Pancreas (tissue), 10 donors: ENCODE measurements at regions of chr1 and their contacts with region 1.

Region 1: GRCh38 chr1:78114034-78114956 is 68.5 kb downstream of the GIPC2 start:
- DNase-seq: peak in 3 of 6 donors; percentile 48 to 75 (median 50)
- ATAC-seq: peak; percentile 87 to 98 (median 96)
- H3K4me3 ChIP-seq: no peak overlapping the region
- H3K27ac ChIP-seq: peak overlapping the region in 1 of 4 donors; percentile 9
- H3K4me1 ChIP-seq: no peaks in the 10 kb centered on the region
- H3K27me3 ChIP-seq: no peaks in the 10 kb centered on the region
- CTCF ChIP-seq: peak in 3 of 4 donors; percentile 57 to 73 (median 59)

Region 2: GRCh38 chr1:77825131-77825709 is 289.1 kb before region 1 on chr1:
- intact Hi-C with region 1: loop called in 1 of 3 experiments (anchors 10 kb)
- DNase-seq: peak in 4 of 6 donors; percentile 25 to 61 (median 58)
- ATAC-seq: peak; percentile 95 to 99 (median 97)
- H3K4me3 ChIP-seq: no peak overlapping the region
- H3K27ac ChIP-seq: no peak overlapping the region
- H3K4me1 ChIP-seq: peaks cover 0 to 12% (median 0%) of the 10 kb centered on the region in 3 donors
- H3K27me3 ChIP-seq: no peaks in the 10 kb centered on the region
- CTCF ChIP-seq: peak in 1 of 4 donors; percentile 10

Region 3: GRCh38 chr1:77888081-77888780 is 226.1 kb before region 1 on chr1 and contains the start of gene NEXN:
- intact Hi-C with region 1: no loop called
- DNase-seq: peak; percentile 76 to 89 (median 81)
- ATAC-seq: peak; percentile 83 to 88 (median 86)
- H3K4me3 ChIP-seq: peak within 1 kb of the TSS; percentile 70 to 76 (median 72)
- H3K27ac ChIP-seq: peak within 1 kb of the TSS; percentile 73 to 93 (median 88)
- H3K4me1 ChIP-seq: peaks cover 0 to 7% (median 0%) of the 10 kb centered on the region in 3 donors
- H3K27me3 ChIP-seq: no peaks in the 10 kb centered on the region
- CTCF ChIP-seq: no peak
- total RNA-seq, gene NEXN: 2.1 to 6.7 (median 2.6) TPM

Region 4: DNA sequence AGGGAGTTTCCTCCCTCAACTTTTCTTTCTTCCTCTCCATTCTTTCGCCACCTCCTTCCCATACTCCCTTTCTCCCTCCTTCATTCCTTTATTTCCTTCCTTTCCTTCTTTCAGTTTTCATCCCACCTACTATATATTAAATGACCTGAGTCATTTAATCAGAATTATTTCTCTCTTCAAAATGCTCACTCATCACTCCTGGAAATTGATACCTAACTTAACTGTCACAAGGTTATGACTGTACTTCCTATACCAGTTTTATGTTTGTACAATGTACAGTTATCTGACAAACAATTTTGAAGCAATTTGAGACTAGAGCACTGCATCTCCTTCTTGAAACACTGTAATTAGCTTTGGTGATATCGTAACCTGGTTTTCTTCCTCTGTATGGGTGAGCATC is 184.5 kb before region 1 on chr1:
- intact Hi-C with region 1: no loop called
- DNase-seq: no peak
- ATAC-seq: no peak
- H3K4me3 ChIP-seq: no peak overlapping the region
- H3K27ac ChIP-seq: no peak overlapping the region
- H3K4me1 ChIP-seq: no peaks in the 10 kb centered on the region
- H3K27me3 ChIP-seq: no peaks in the 10 kb centered on the region
- CTCF ChIP-seq: no peak

Region 5: GRCh38 chr1:77978969-77979876 is 135.1 kb before region 1 on chr1 and contains the start of gene FUBP1:
- intact Hi-C with region 1: loop called in 1 of 3 experiments (anchors 5 kb)
- DNase-seq: peak; percentile 90 to 97 (median 94)
- ATAC-seq: peak; percentile 82 to 92 (median 88)
- H3K4me3 ChIP-seq: peak within 1 kb of the TSS; percentile 52 to 76 (median 62)
- H3K27ac ChIP-seq: peak within 1 kb of the TSS; percentile 93 to 99 (median 96)
- H3K4me1 ChIP-seq: peaks cover 7 to 33% (median 26%) of the 10 kb centered on the region in 3 donors
- H3K27me3 ChIP-seq: no peaks in the 10 kb centered on the region
- CTCF ChIP-seq: peak; percentile 38 to 66 (median 50)
- total RNA-seq, gene FUBP1: 36.9 to 81.5 (median 51.6) TPM

Region 6: DNA sequence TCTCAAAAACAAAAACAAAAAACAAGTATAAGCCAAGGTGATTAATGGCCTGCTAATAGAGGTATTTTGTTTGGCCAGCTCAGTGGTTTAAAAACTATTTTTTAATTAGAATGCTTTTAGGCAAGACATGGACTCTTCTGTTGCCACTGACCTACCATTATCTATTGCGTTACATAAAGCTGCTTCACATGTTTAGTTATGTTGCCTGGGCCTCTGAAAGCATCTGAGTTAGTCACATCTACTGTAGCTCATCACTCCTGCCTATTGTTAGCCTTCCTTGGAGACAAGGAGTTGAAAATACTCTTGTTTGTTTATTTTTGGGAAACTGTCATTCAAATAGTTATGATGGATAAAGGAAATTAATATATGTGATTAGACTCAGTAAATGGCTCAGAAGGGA is 95.3 kb before region 1 on chr1:
- intact Hi-C with region 1: no loop called
- DNase-seq: no peak
- ATAC-seq: no peak
- H3K4me3 ChIP-seq: no peak overlapping the region
- H3K27ac ChIP-seq: no peak overlapping the region
- H3K4me1 ChIP-seq: no peaks in the 10 kb centered on the region
- H3K27me3 ChIP-seq: no peaks in the 10 kb centered on the region
- CTCF ChIP-seq: no peak

Region 7: DNA sequence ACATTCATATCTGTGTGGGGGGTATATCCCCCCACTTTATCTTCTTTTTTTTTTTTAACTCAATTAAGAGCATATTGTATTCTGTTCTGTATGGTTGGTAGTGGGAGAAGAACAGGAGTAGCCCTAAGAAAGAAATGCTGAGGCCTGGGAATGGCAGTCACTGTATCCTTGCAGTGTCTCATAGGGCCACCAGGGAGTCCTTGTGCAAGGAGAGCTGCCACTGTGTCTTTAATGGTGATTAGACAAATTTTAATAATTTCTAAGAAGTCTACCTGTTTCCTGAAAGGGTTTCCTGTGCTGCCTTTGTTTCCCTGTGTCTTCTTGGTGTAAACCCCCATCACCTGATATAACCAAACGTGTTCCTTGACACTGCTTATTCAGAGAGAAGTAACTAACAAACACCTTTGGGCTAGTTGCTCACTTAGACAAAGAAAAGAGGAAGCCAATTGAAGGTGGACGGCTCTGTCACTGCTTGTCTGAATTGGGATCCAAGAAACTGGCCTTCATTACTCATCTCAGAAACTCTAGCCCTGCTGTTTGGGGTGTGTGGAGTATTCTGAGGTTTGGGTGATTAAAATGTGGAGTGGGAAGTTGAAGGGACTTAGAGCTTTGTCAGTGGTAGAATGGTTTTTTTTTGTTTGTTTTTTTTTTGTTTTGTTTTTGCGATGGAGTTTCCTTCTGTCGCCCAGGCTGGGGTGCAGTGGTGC is 53.3 kb before region 1 on chr1:
- intact Hi-C with region 1: loop called in 1 of 3 experiments (anchors 10 kb)
- DNase-seq: no peak
- ATAC-seq: no peak
- H3K4me3 ChIP-seq: no peak overlapping the region
- H3K27ac ChIP-seq: no peak overlapping the region
- H3K4me1 ChIP-seq: no peaks in the 10 kb centered on the region
- H3K27me3 ChIP-seq: no peaks in the 10 kb centered on the region
- CTCF ChIP-seq: no peak

Region 8: DNA sequence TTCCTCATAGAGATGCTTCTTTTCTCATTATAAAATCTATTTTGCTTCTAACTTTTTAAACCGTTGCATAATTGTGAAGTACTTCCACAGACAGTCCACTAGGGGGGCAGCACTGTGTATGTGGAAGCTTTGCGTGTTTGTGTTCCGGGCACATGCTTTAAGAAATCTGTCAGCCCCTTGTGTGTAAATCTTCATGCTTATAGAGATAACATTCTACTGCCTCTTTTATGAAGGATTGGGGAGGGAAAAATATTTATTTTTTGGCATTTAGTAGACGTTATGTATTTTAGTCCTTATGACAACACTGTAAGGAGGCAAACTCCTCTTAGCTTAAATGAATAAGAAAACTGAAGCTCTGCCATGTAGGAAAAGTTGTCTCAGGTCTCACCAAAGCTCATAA is 219.2 kb after region 1 on chr1:
- intact Hi-C with region 1: no loop called
- DNase-seq: peak in 1 of 6 donors; percentile 21
- ATAC-seq: peak; percentile 61 to 93 (median 88)
- H3K4me3 ChIP-seq: no peak overlapping the region
- H3K27ac ChIP-seq: no peak overlapping the region
- H3K4me1 ChIP-seq: no peaks in the 10 kb centered on the region
- H3K27me3 ChIP-seq: no peaks in the 10 kb centered on the region
- CTCF ChIP-seq: peak; percentile 27 to 70 (median 58)